ENCODE measurements at regions of chr13 and their contacts with region 1.

Region 1: DNA sequence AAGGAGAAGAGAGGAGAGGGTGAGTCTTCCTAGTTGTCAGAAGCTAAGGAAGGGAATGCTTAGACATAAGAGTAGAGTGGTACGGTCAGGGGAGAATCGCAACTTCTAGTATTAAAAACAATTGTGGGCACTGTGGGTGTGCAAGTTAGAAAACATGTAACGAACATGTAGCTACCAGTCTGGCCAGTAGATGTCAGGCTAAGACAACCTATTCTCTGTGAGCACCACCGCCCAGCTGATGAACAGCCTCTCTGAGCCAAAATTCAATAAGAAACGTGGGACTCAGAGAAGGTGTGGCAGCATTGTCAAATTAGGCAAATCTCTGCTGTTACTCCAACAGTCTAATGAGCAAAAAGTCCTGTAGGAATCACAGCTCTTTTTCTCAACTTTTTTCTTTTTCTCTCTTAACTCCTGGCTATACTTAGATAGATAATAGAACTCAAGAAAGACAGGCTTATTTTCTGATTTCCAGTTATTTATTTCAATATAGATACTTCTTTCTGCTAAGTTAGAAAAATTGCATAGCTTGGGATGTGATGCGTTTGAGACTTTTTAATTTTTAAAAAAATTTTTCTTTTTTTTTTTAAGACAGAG is 186.2 kb downstream of the USP12 start:
- DNase-seq: peak; percentile 76
- CTCF ChIP-seq: peak; percentile 71

Region 2: GRCh38 chr13:27242706-27243105 is 257.3 kb after region 1 on chr13:
- in situ Hi-C with region 1: no loop called
- DNase-seq: no peak
- CTCF ChIP-seq: no peak

Region 3: DNA sequence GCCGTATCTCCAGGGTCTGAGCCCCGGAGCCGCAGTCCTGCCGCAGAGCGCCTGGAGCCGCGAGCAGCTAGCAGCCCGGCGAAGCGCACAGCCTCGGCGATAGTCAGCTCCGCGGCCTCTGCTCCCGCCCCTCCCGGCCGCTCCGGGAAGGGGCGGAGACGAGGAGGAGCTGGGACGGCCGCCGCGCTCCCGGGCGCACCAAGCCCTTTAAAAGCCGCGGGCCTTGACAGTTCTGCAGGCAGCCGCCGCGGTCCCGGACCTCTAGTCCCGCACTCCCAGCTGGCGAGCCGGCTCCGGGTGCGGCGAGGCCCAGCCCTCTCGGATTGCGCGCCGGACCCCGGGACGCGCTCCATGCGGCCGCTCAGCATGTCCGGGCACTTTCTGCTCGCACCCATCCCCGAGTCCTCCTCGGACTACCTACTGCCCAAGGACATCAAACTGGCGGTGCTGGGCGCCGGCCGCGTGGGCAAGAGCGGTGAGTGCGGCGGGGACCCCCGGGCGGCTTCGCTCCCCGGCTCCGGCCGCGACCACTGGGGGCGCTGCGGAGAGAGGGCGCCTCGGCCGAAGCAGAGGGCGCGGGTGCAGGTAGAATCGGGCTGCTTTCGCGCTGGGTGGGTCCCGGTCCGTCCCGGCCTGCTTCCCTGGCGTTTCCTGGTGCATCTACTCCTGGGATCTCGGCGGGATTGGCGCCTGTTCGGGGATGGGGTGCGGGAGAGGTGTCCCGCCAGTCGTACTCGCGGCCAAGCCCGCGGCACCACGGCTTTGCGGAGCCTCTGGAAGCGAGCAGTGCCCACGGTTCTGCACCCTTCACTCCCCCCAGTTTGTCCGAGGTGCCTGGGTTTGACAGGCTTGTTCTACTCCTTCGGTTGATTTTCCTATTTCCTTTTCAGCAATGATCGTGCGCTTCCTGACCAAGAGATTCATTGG is 285.5 kb after region 1 on chr13 and contains the start of gene RASL11A:
- in situ Hi-C with region 1: loop called (anchors 10 kb)
- DNase-seq: peak; percentile 90
- CTCF ChIP-seq: peak; percentile 92

Region 4: DNA sequence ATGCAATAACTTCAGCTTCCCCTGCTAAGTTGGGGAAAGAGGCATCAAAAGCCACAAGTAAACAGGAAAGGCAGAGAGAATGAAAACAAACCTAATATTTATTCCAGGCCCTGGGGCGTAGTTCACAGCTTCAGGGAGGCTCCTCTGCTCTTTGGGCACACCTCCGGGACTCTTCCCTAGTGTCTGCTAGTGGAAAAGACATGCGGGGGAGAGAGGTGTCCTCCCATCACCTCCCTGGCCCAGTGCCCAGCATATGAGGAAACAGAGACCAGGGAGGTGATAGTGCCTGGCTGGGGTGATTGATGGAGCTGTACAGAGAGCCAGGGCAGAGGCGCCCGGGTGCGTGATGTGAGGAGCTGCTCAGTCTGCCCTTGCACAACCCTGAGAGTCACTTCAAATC is 356.2 kb after region 1 on chr13:
- in situ Hi-C with region 1: loop called (anchors 10 kb)
- DNase-seq: no peak
- CTCF ChIP-seq: no peak